ENCODE measurements at regions of chr11 and their contacts with region 1.

Region 1: GRCh38 chr11:125923012-125923579 is 18.8 kb downstream of the DDX25 start:
- DNase-seq: peak; percentile 77
- H3K4me3 Mint-ChIP-seq: no peak overlapping the region
- H3K27ac Mint-ChIP-seq: no peak overlapping the region
- H3K4me1 Mint-ChIP-seq: peaks cover 8% of the 10 kb centered on the region
- H3K27me3 Mint-ChIP-seq: peaks cover 53% of the 10 kb centered on the region
- CTCF ChIP-seq: peak; percentile 83

Region 2: DNA sequence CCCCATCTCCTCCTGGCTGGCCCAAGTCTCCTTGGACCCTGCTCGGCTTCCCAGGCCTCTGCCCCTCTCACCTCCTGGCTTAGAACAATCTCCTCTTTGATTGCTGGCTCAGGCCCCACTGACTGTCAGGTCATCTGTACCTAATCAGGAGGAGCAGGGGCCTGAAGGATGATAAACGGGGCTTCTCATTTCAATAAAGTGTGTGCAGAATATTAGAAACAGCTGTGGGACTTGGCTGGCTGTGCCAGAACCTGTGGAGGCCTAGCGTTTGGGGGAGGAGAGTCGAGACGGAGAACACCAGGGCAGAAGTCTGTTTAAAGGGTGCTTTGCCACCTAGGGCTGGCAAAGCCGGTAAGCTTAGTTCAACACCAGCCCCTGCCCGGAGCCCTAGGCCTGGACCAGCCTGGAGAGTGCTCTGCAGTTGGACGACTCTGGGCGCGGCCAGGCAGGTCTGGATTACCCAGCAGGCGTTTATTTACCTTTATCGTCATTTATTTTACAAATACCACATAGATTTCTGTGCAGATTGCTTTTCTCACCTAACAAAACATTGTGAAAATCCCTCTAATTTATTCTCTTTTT is 12.6 kb after region 1 on chr11:
- CTCF ChIA-PET with region 1: interaction called, 30 read pairs
- POLR2A ChIA-PET with region 1: no interaction called
- intact Hi-C with region 1: no loop called
- DNase-seq: no peak
- H3K4me3 Mint-ChIP-seq: no peak overlapping the region
- H3K27ac Mint-ChIP-seq: no peak overlapping the region
- H3K4me1 Mint-ChIP-seq: no peaks in the 10 kb centered on the region
- H3K27me3 Mint-ChIP-seq: no peaks in the 10 kb centered on the region
- CTCF ChIP-seq: no peak

Region 3: GRCh38 chr11:125941619-125942611 is 18.8 kb after region 1 on chr11:
- CTCF ChIA-PET with region 1: interaction called, 30 read pairs
- POLR2A ChIA-PET with region 1: no interaction called
- intact Hi-C with region 1: no loop called
- DNase-seq: peak; percentile 61
- H3K4me3 Mint-ChIP-seq: no peak overlapping the region
- H3K27ac Mint-ChIP-seq: peak overlapping the region; percentile 32
- H3K4me1 Mint-ChIP-seq: peaks cover 9% of the 10 kb centered on the region
- H3K27me3 Mint-ChIP-seq: no peaks in the 10 kb centered on the region
- CTCF ChIP-seq: peak; percentile 70

Region 4: GRCh38 chr11:126132319-126132718 is 209.2 kb after region 1 on chr11:
- CTCF ChIA-PET with region 1: interaction called, 19 read pairs
- POLR2A ChIA-PET with region 1: interaction called, 3 read pairs
- intact Hi-C with region 1: no loop called
- DNase-seq: peak; percentile 63
- H3K4me3 Mint-ChIP-seq: peak overlapping the region; percentile 68
- H3K27ac Mint-ChIP-seq: peak overlapping the region; percentile 99
- H3K4me1 Mint-ChIP-seq: peaks cover 17% of the 10 kb centered on the region
- H3K27me3 Mint-ChIP-seq: no peaks in the 10 kb centered on the region
- CTCF ChIP-seq: no peak

Region 5: GRCh38 chr11:126186708-126187529 is 263.8 kb after region 1 on chr11:
- CTCF ChIA-PET with region 1: interaction called, 114 read pairs
- POLR2A ChIA-PET with region 1: no interaction called
- intact Hi-C with region 1: no loop called
- DNase-seq: no peak
- H3K4me3 Mint-ChIP-seq: no peak overlapping the region
- H3K27ac Mint-ChIP-seq: no peak overlapping the region
- H3K4me1 Mint-ChIP-seq: peaks cover 10% of the 10 kb centered on the region
- H3K27me3 Mint-ChIP-seq: no peaks in the 10 kb centered on the region
- CTCF ChIP-seq: no peak

Region 6: GRCh38 chr11:126194121-126194543 is 271.0 kb after region 1 on chr11:
- CTCF ChIA-PET with region 1: interaction called, 114 read pairs
- POLR2A ChIA-PET with region 1: interaction called, 12 read pairs
- intact Hi-C with region 1: loop called (anchors 1 kb)
- DNase-seq: peak; percentile 59
- H3K4me3 Mint-ChIP-seq: no peak overlapping the region
- H3K27ac Mint-ChIP-seq: no peak overlapping the region
- H3K4me1 Mint-ChIP-seq: peaks cover 10% of the 10 kb centered on the region
- H3K27me3 Mint-ChIP-seq: no peaks in the 10 kb centered on the region
- CTCF ChIP-seq: peak; percentile 65

Region 7: GRCh38 chr11:126268708-126269579 is 345.8 kb after region 1 on chr11 and contains the starts of genes FOXRED1 and SRPRA:
- CTCF ChIA-PET with region 1: no interaction called
- POLR2A ChIA-PET with region 1: interaction called, 3 read pairs
- intact Hi-C with region 1: loop called (anchors 5 kb)
- DNase-seq: peak; percentile 99
- H3K4me3 Mint-ChIP-seq: peak within 1 kb of the TSS; percentile 94
- H3K27ac Mint-ChIP-seq: peak within 1 kb of the TSS; percentile 97
- H3K4me1 Mint-ChIP-seq: peaks cover 23% of the 10 kb centered on the region
- H3K27me3 Mint-ChIP-seq: no peaks in the 10 kb centered on the region
- CTCF ChIP-seq: no peak
- total RNA-seq, gene FOXRED1: 28.2 and 37.2 TPM in 2 replicates
- total RNA-seq, gene SRPRA: 176 and 258 TPM in 2 replicates